Gastrocnemius medialis (tissue), 4 donors: ENCODE measurements at regions of chr5 and their contacts with region 1.

Region 1: GRCh38 chr5:116374434-116374852 is 200.2 kb downstream of the SEMA6A start:
- DNase-seq: no peak
- ATAC-seq: no peak
- H3K4me3 ChIP-seq: no peak overlapping the region
- H3K27ac ChIP-seq: peak overlapping the region; percentile 11 to 72 (median 55)
- H3K4me1 ChIP-seq: peaks cover 74 to 78% of the 10 kb centered on the region in 2 donors
- H3K27me3 ChIP-seq: no peaks in the 10 kb centered on the region
- CTCF ChIP-seq: no peak
- POLR2A ChIP-seq: no peak

Region 2: GRCh38 chr5:116023619-116024018 is 350.8 kb before region 1 on chr5:
- in situ Hi-C with region 1: no loop called
- intact Hi-C with region 1: no loop called
- DNase-seq: no peak
- ATAC-seq: no peak
- H3K4me3 ChIP-seq: no peak overlapping the region
- H3K27ac ChIP-seq: no peak overlapping the region
- H3K4me1 ChIP-seq: no peaks in the 10 kb centered on the region
- H3K27me3 ChIP-seq: no peaks in the 10 kb centered on the region
- CTCF ChIP-seq: no peak
- POLR2A ChIP-seq: no peak

Region 3: GRCh38 chr5:116360008-116360853 is 14.2 kb before region 1 on chr5:
- in situ Hi-C with region 1: no loop called
- intact Hi-C with region 1: loop called (anchors 1 kb)
- DNase-seq: peak; percentile 79 to 88
- ATAC-seq: peak; percentile 98
- H3K4me3 ChIP-seq: no peak overlapping the region
- H3K27ac ChIP-seq: peak overlapping the region; percentile 59 to 69 (median 64)
- H3K4me1 ChIP-seq: peaks cover 28 to 31% of the 10 kb centered on the region in 2 donors
- H3K27me3 ChIP-seq: no peaks in the 10 kb centered on the region
- CTCF ChIP-seq: no peak
- POLR2A ChIP-seq: no peak

Region 4: DNA sequence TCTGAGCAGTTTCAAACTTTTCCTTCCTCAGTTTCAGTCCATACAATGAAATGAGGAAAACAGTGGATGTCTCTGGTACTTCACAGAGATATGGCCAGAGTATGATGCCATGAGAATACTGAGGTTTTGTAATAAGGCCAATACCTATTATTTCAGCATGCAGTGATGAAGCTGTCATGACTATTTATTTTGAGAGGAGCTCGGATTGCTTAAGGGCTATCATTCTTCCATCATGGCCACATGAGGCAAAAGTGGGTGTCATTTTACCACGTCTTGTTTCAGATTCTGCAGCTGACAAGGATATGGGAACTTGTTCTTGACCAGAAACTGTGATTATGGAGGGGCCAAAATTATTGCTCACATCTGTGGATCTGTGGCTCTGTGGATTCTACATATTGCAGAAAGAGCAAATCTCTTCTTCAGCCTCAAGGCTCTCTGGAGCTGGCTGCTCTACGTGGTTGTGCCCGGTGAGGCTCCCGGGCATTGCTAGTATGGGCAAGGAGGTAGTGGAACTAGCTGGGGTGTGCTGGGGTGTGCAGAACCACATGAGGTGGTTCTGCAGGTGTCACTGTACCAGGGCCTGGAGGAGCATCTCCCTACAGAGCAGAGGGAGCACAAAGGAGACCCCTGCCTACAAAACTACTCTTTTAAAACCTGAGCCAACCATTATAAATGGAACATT is 19.9 kb after region 1 on chr5:
- in situ Hi-C with region 1: no loop called
- intact Hi-C with region 1: loop called (anchors 1 kb)
- DNase-seq: peak; percentile 40 to 43
- ATAC-seq: peak; percentile 92 to 93
- H3K4me3 ChIP-seq: no peak overlapping the region
- H3K27ac ChIP-seq: peak overlapping the region; percentile 71 to 74 (median 74)
- H3K4me1 ChIP-seq: peaks cover 39 to 40% of the 10 kb centered on the region in 2 donors
- H3K27me3 ChIP-seq: no peaks in the 10 kb centered on the region
- CTCF ChIP-seq: no peak
- POLR2A ChIP-seq: no peak

Region 5: DNA sequence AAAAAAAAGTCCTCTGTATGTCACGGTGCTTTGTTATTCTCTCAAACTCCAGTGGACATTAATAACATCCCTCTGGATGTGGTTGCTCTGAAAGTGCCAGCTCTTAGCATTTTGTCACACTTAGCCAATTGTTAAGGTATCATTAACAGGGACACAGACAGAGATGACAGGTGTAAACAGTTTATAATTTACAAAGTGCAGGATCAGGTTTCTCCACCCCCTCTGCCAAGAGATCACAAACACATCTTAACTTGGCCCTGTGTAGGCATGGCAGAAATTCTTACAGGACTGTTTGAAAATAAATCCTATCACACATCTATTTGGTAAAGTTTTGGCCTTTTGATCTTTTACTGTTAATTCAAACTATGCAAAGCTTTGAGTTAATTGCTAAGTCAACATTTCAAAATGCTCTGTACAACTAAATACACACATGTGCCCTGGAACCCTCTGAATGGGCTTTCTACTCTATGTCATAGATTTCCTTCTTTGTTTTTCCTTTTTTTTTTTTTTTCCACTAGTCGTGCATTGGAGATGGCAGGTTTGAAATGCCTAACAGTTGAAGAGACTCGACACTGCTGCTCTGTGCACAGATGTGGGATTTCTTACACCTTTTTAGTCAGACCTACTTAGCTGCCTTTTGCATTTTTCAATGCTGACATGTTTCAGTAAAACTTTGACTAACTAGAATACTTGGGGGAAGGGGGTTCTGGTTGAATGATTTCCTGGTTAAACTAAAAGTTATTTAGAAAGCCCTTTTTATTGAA is 158.5 kb after region 1 on chr5:
- in situ Hi-C with region 1: no loop called
- intact Hi-C with region 1: loop called (anchors 10 kb)
- DNase-seq: peak; percentile 12 to 13
- ATAC-seq: peak; percentile 85 to 88
- H3K4me3 ChIP-seq: no peak overlapping the region
- H3K27ac ChIP-seq: no peak overlapping the region
- H3K4me1 ChIP-seq: peaks cover 31 to 39% of the 10 kb centered on the region in 2 donors
- H3K27me3 ChIP-seq: peaks cover 0 to 5% (median 0%) of the 10 kb centered on the region in 3 donors
- CTCF ChIP-seq: no peak
- POLR2A ChIP-seq: no peak

Region 6: DNA sequence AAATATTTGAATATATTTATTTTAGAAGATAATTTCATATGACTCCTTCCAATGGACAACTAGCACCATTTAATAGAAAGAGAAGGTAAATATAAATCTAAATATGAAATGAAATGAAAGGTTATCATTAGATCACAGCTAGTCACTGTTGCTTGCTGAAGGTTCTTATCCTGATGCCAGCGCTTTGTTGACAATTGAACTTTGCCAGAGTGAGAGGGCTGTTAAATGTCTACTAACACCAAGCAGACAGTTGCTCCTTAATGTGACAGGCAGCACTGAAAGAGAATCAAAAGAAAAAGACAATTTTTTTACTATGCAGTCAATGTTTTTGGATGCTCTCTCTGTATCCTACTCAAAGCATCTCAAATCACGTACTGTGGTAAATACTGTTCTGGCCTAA is 352.8 kb after region 1 on chr5:
- in situ Hi-C with region 1: no loop called
- intact Hi-C with region 1: no loop called
- DNase-seq: no peak
- ATAC-seq: no peak
- H3K4me3 ChIP-seq: no peak overlapping the region
- H3K27ac ChIP-seq: no peak overlapping the region
- H3K4me1 ChIP-seq: no peaks in the 10 kb centered on the region
- H3K27me3 ChIP-seq: no peaks in the 10 kb centered on the region
- CTCF ChIP-seq: no peak
- POLR2A ChIP-seq: no peak

Region 7: GRCh38 chr5:116747881-116748280 is 373.4 kb after region 1 on chr5:
- in situ Hi-C with region 1: no loop called
- intact Hi-C with region 1: no loop called
- DNase-seq: no peak
- ATAC-seq: no peak
- H3K4me3 ChIP-seq: no peak overlapping the region
- H3K27ac ChIP-seq: no peak overlapping the region
- H3K4me1 ChIP-seq: no peaks in the 10 kb centered on the region
- H3K27me3 ChIP-seq: no peaks in the 10 kb centered on the region
- CTCF ChIP-seq: no peak
- POLR2A ChIP-seq: no peak